Lower leg skin (tissue), 4 donors: ENCODE measurements at regions of chr10 and their contacts with region 1.

Region 1: GRCh38 chr10:118908557-118909256 is 120.8 kb upstream of the NANOS1 start:
- DNase-seq: no peak
- H3K4me3 ChIP-seq: no peak overlapping the region
- CTCF ChIP-seq: no peak
- POLR2A ChIP-seq: no peak

Region 2: GRCh38 chr10:118412932-118413331 is 495.8 kb before region 1 on chr10:
- intact Hi-C with region 1: loop called (anchors 5 kb)
- DNase-seq: no peak
- H3K4me3 ChIP-seq: no peak overlapping the region
- CTCF ChIP-seq: no peak
- POLR2A ChIP-seq: no peak

Region 3: DNA sequence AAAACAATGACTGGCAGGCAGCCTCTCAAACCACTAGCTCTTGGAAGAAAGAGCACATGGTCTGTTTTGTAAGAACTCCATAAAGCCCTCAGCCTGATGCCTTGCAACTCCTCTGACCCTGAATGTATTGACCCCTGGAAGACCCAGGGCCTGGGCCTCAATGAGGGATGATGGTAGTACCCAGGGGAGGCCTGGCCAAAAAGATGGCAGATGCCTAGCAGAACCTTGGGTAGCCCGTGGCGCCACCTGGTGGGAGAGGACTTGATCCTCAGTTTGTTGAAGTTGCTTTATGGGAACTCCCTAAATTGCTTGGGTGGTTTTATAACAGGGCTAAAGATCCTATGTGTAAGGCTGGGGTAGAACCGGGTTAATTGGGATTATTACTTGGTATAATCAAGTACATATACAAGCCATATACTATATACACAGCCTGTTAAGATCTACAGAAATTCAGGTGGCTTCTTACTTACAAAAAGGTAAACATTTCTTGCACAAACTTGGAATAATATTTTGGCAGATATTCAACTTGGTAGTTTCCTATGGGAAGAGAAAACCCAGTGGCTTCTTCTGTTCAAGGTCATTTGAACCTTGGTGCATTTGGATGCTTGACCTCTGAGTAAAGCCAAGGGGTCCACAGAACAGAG is 58.2 kb before region 1 on chr10:
- intact Hi-C with region 1: no loop called
- DNase-seq: peak; percentile 55 to 91
- H3K4me3 ChIP-seq: no peak overlapping the region
- CTCF ChIP-seq: no peak
- POLR2A ChIP-seq: no peak

Region 4: GRCh38 chr10:119416855-119417254 is 508.1 kb after region 1 on chr10:
- intact Hi-C with region 1: no loop called
- DNase-seq: peak in 1 of 2 donors; percentile 92
- H3K4me3 ChIP-seq: no peak overlapping the region
- CTCF ChIP-seq: no peak
- POLR2A ChIP-seq: no peak

Region 5: GRCh38 chr10:120719333-120719732 is 1810.6 kb after region 1 on chr10:
- intact Hi-C with region 1: no loop called
- DNase-seq: no peak
- H3K4me3 ChIP-seq: no peak overlapping the region
- CTCF ChIP-seq: no peak
- POLR2A ChIP-seq: no peak